Cardiac septum (tissue), 1 donor: ENCODE measurements at regions of chr1 and their contacts with region 1.

Region 1: GRCh38 chr1:28248283-28249012 is 10.9 kb upstream of the SESN2 start:
- DNase-seq: peak; percentile 86

Region 2: GRCh38 chr1:28329395-28330153 is 81.1 kb after region 1 on chr1:
- intact Hi-C with region 1: loop called (anchors 2 kb)
- DNase-seq: no peak

Region 3: GRCh38 chr1:28369371-28370238 is 121.2 kb after region 1 on chr1 and contains the start of gene PHACTR4:
- intact Hi-C with region 1: loop called (anchors 5 kb)
- DNase-seq: peak; percentile 95
- total RNA-seq, gene PHACTR4: 18.0 TPM

Region 4: DNA sequence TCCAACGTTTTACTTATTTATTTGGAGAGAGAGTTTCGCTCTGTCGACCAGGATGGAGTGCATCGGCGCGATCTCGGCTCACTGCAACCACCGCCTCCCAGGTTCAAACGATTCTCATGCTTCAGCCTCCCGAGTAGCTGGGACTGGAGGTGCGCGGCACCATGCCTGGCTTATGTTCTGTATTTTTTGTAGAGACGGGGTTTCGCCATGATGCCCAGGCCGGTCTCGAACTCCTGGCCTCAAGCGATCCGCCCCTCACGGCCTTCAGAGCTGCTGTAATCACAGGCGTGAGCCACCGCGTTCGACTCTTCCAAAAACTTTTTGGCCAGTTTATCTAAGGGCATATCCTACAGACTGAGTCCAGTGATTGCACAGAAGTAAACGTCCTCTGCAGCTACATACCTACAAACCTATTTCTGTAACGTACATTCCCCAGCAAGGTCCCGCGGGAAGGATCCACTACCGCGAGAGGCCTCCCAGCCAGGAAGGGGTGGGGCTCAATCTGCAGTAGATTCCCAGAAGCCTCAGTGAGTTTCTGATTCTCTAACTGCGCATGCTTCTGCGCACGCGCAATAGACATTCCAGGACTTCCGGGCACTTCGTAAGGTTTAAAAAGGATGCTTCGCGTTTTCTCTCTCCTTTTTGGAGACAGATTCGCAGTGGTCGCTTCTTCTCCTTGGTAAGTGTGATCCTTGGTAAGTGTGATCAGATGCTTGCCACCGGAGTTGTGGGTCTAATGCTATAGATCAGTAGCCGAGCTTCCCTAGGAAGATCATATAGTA is 257.1 kb after region 1 on chr1 and contains the start of gene RCC1:
- intact Hi-C with region 1: loop called (anchors 5 kb)
- DNase-seq: peak; percentile 97
- total RNA-seq, gene RCC1: 4.1 TPM

Region 5: DNA sequence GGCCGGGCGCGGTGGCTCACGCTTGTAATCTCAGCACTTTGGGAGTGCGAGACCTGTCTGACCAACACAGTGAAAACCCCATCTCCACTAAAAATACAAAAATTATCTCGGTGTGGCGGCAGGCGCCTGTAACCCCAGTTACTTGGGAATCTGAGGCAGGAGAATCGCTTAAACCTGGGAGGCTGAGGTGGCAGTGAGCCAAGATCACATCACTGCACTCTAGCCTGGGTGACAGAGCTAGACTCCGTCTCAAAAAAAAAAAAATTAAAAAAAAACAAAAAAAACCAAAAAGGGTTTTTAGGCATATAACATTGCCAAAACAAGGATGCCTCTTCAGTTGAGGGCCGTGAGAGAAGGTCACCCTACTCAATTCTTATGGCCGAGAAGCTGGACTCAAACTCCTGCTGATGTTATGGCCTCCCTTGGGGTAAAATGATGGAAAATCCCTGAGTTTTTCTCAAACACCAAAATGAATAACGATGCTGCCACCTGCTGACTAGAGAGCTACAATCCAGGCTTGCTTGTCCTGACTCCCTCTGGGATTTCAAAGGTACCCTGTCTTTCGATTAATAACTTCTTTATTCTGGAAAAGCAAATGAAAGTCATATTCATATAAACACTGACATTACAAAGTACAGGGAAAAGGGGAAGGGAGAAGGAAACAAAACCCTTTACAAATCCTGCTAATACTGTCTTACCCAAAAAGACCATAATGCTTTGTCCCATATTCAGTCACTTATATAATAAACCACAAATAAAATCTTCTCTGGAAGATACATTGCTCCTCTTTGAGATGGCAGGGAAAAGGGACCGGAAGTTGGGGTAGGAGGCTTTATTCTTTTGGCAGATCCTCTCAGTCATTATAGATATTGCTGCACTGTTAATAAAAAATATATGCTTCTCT is 354.3 kb after region 1 on chr1:
- intact Hi-C with region 1: loop called (anchors 5 kb)
- DNase-seq: no peak